Esophagus squamous epithelium (tissue), 5 donors: ENCODE measurements at regions of chr5 and their contacts with region 1.

Region 1: GRCh38 chr5:165272436-165272835 is 1767.0 kb downstream of the MAT2B start:
- DNase-seq: no peak
- H3K4me3 ChIP-seq: no peak overlapping the region
- H3K27ac ChIP-seq: no peak overlapping the region
- H3K4me1 ChIP-seq: no peaks in the 10 kb centered on the region
- H3K27me3 ChIP-seq: no peaks in the 10 kb centered on the region
- CTCF ChIP-seq: no peak
- POLR2A ChIP-seq: no peak

Region 2: DNA sequence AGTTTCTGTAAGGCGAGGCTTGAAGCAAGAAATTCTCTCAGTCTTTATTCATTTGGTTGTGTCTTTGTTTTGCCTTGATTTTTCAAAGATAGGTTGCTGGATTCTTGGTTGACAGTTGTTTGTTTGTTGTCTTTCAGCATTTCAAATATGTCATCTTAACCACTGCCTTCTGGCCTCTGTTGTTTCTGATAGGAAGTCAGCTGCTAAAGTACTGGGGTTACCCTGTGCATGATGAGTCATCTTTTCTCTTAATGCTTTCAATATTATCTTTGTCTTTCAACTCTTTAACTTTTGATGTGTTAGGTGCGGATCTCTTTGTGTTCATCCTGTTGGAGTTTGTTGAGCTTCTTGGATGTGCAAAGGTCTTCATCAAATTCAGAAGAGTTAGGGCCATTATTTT is 195.8 kb before region 1 on chr5:
- intact Hi-C with region 1: no loop called
- DNase-seq: no peak
- H3K4me3 ChIP-seq: no peak overlapping the region
- H3K27ac ChIP-seq: no peak overlapping the region
- H3K4me1 ChIP-seq: no peaks in the 10 kb centered on the region
- H3K27me3 ChIP-seq: no peaks in the 10 kb centered on the region
- CTCF ChIP-seq: no peak
- POLR2A ChIP-seq: no peak

Region 3: GRCh38 chr5:165244407-165244806 is 28.0 kb before region 1 on chr5:
- intact Hi-C with region 1: loop called (anchors 2 kb)
- DNase-seq: no peak
- H3K4me3 ChIP-seq: no peak overlapping the region
- H3K27ac ChIP-seq: no peak overlapping the region
- H3K4me1 ChIP-seq: no peaks in the 10 kb centered on the region
- H3K27me3 ChIP-seq: no peaks in the 10 kb centered on the region
- CTCF ChIP-seq: no peak
- POLR2A ChIP-seq: no peak